Ascending aorta (tissue), 2 donors: ENCODE measurements at regions of chr16 and their contacts with region 1.

Region 1: DNA sequence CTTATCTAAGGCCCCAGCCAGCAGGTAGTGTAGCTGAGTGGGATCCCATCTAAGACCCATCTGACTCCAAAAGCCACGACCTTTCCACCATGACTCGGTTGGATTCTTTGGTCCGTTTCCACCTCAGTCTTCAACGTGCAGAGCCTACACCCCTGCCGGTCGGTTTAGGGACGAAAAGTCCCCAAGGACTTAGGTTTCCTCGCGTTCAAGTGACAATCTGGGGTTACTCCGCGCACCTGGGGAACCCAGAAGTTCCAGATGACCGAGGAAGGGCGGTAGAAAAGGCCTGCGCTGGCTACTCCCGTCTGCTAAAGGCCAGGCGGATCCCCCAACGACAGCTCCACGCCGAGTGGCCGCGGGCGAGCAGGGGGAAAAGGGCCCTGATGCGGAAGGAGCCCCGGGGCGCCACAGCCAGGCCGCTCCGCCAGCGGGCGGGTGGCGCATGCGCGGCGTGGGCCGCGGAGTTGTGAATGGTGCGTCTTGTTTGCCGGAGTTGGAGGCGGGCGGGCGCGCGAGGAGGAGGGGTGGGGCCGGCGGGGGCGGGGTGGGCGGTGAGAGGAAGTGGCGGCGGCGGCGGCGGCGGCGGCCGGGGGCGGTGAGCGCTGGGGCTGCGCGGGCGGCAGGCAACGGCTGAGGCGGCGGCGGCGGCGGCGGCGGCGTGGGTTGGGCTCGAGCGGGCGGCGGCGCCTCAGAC is at the start of gene CBFB:
- DNase-seq: peak; percentile 78 to 95
- H3K4me3 ChIP-seq: peak within 1 kb of the TSS; percentile 98 to 100
- H3K27ac ChIP-seq: peak within 1 kb of the TSS; percentile 98 to 99
- H3K4me1 ChIP-seq: peaks cover 8 to 20% of the 10 kb centered on the region in 2 donors
- H3K27me3 ChIP-seq: no peaks in the 10 kb centered on the region
- CTCF ChIP-seq: peak in 1 of 3 experiments; percentile 27
- total RNA-seq, gene CBFB: 59.1 TPM

Region 2: DNA sequence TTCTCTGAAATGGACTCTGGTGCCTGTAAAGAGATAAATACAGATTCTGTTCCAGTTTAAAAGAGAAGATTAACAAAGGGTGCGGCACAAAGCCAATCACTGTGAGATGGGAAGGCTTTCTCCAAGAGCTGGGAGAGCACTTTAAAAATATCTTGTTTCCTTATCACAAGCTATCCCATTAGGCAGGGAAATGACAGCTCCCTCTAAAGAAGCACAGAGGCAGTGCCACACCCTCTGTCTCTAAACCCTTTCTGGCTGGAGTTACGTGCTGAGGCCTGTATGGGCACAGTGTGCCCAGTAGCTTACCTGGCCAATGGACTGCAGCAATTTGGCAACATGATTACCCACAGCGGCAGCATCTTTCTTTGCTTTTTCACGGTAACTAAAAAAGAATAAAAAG is 218.3 kb before region 1 on chr16:
- intact Hi-C with region 1: no loop called
- DNase-seq: no peak
- H3K4me3 ChIP-seq: no peak overlapping the region
- H3K27ac ChIP-seq: no peak overlapping the region
- H3K4me1 ChIP-seq: no peaks in the 10 kb centered on the region
- H3K27me3 ChIP-seq: no peaks in the 10 kb centered on the region
- CTCF ChIP-seq: no peak

Region 3: GRCh38 chr16:66977341-66978113 is 51.2 kb before region 1 on chr16:
- intact Hi-C with region 1: loop called (anchors 2 kb)
- DNase-seq: peak; percentile 35 to 92
- H3K4me3 ChIP-seq: no peak overlapping the region
- H3K27ac ChIP-seq: no peak overlapping the region
- H3K4me1 ChIP-seq: peaks cover 0 to 7% of the 10 kb centered on the region in 2 donors
- H3K27me3 ChIP-seq: no peaks in the 10 kb centered on the region
- CTCF ChIP-seq: peak; percentile 95 to 99 (median 97)

Region 4: DNA sequence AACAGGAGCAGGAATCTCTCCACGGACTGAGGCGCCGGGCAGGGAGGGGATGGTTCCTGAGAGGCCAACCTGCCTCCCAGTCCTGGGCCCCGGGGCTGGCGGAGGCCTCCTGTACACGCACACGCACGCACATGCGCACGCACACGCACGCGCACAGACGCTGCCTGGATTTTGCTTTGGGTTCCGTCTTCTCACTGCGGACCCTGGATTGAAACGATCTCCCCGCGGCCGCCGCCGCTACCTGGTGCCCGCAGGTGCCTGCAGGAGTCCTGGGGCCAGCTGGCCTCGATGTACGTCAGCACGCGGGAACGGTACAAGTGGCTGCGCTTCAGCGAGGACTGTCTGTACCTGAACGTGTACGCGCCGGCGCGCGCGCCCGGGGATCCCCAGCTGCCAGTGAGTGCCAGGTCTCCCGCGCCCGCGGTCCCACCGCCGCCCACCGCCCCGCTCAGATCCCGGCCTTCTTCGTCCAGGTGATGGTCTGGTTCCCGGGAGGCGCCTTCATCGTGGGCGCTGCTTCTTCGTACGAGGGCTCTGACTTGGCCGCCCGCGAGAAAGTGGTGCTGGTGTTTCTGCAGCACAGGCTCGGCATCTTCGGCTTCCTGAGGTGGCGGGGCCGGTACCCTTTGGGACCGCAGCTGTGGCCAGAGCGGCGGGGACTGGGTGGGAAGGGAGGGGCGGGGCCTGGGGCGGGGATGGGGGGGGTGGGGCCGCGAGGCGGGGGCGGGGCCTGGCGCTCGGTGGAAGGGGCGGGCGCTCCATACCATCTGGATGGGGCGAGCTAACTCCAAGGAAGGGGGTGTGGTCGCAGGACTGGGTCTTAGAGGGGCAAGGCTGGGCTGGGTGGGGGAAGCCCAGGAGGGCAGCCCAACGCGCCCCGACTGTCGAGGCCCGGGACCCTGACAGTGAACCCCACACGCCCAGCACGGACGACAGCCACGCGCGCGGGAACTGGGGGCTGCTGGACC is 28.0 kb before region 1 on chr16:
- intact Hi-C with region 1: loop called (anchors 2 kb)
- DNase-seq: peak; percentile 33 to 83
- H3K4me3 ChIP-seq: peak overlapping the region; percentile 54 to 65
- H3K27ac ChIP-seq: peak overlapping the region; percentile 65 to 72
- H3K4me1 ChIP-seq: peaks cover 4 to 27% of the 10 kb centered on the region in 2 donors
- H3K27me3 ChIP-seq: no peaks in the 10 kb centered on the region
- CTCF ChIP-seq: no peak

Region 5: GRCh38 chr16:67013823-67014633 is 14.7 kb before region 1 on chr16:
- intact Hi-C with region 1: loop called (anchors 1 kb)
- DNase-seq: peak in 1 of 2 donors; percentile 91
- H3K4me3 ChIP-seq: peak overlapping the region; percentile 76 to 77
- H3K27ac ChIP-seq: peak overlapping the region; percentile 77 to 83
- H3K4me1 ChIP-seq: peaks cover 0 to 15% of the 10 kb centered on the region in 2 donors
- H3K27me3 ChIP-seq: no peaks in the 10 kb centered on the region
- CTCF ChIP-seq: peak; percentile 11 to 28 (median 24)

Region 6: DNA sequence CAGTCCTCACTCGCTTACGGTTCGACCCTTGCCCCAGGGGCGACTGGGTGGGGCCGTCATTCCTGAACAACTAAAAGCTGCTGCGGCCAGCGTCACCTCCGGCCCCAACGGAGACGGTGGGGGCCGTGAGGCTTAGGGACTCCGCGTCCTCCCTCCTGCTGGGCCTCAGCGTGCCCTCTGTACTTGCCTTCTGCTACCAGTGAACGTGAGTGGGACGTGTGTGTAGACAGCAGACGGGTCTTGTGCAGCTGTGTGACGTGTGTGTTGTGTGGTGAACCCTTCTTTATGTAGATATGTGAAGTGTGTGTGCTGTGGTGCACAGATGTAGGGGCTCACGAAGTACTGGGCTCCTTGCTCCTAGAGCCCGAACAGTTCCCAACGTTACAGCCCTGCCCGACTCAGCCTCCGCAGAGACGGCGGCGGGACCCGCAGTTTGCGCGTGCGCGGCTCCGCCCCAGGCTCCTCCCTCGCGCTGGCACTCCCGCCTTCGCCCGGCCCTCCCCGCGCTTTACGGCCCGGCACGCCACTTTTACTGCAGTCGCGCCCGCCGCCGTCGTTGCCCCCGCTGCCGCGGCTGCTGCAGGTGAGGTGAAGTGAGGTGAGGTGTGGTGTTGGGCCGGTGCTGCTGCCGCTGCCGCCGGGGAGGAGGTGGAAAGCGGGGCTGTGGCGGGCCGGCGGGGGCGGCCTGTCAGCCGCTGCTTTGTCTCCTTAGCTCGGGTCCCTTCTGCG is 80.9 kb after region 1 on chr16 and contains the start of gene PHAF1:
- intact Hi-C with region 1: loop called (anchors 5 kb)
- DNase-seq: peak; percentile 51 to 95
- H3K4me3 ChIP-seq: peak within 1 kb of the TSS; percentile 88 to 90
- H3K27ac ChIP-seq: peak within 1 kb of the TSS; percentile 81 to 87
- H3K4me1 ChIP-seq: peaks cover 10 to 13% of the 10 kb centered on the region in 2 donors
- H3K27me3 ChIP-seq: no peaks in the 10 kb centered on the region
- CTCF ChIP-seq: no peak
- total RNA-seq, gene PHAF1: 4.5 TPM

Region 7: DNA sequence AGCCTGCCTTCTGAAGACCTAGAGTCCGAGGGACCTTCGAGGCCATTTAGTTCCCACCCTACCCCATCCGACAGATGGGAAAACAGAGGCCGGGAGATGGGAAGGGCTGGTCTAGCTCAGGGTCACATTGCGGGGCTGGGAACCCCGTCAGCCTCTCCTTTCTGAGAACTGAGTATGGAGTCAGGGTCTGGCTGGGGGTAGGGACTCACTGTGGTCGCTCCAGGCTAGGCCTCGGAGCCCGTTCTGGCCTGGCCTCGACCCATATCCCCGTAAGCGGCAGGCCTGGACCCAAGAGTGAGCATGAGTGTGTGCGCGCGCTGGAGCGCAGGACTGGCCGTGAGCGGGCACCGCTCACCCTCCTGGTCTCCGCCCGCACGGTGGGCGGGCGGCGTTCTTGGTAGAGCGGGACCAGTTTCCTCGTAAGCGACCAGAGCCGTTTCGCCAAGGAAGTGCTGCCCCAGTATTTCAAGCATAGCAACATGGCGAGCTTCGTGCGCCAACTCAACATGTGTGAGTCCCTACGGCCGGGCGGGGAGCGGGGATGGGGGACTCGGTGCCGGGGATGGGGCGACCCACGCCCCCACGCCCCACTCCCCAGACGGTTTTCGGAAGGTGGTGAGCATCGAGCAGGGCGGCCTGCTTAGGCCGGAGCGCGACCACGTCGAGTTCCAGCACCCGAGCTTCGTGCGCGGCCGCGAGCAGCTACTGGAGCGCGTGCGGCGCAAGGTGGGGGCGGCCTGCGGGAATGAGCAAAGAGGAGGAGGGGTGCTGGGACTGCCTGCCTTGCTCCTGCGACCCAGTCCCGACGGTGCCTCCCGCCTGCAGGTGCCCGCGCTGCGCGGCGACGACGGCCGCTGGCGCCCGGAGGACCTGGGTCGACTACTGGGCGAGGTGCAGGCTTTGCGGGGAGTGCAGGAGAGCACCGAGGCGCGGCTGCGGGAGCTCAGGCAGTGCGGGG is 136.7 kb after region 1 on chr16:
- intact Hi-C with region 1: no loop called
- DNase-seq: no peak
- H3K4me3 ChIP-seq: peak overlapping the region; percentile 50 to 57
- H3K27ac ChIP-seq: peak overlapping the region; percentile 77 to 79
- H3K4me1 ChIP-seq: peaks cover 29 to 53% of the 10 kb centered on the region in 2 donors
- H3K27me3 ChIP-seq: no peaks in the 10 kb centered on the region
- CTCF ChIP-seq: no peak